MCF 10A (cell line): ENCODE measurements at regions of chr7 and their contacts with region 1.

Region 1: DNA sequence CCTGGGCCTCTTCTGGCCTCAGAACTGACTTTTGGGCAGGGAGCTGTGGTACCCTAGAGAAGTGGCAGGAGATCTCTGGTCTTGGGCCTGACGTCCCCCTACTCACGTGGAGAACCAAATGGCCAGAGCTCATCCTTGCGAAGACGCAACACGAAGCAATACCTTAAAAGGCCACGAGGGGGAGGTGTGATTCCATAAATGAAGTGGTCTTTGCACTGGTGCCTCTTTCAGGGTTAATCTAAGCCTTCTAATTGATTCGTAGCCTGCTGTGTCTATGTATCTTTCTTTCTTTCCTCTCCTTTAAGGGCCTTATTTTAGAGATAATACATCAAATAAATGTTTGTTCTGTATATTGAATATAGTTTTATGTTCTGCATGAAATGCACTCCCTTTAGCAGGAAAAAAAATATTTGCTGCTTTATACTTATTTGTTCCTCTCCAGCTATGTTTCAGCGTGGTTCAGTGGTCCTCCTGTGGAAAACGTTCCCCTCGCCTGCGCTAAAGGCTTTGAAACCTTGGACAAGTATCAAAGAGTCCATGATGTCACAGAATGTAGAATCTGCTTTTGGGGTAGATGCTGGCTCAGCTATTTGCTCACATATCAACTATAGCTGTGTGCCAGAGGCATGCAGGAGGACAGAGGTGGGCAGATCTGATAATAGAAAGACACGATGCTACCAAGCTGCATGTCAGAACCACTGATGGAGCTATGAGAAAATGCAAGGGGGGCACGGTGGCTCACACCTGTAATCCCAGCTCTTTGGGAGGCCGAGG is 41.0 kb downstream of the STRA8 start:
- DNase-seq: peak; percentile 82
- H3K4me3 Mint-ChIP-seq: no peak overlapping the region
- H3K27ac Mint-ChIP-seq: no peak overlapping the region
- H3K4me1 Mint-ChIP-seq: no peaks in the 10 kb centered on the region
- H3K27me3 Mint-ChIP-seq: peaks cover 1% of the 10 kb centered on the region
- CTCF ChIP-seq: peak; percentile 85

Region 2: DNA sequence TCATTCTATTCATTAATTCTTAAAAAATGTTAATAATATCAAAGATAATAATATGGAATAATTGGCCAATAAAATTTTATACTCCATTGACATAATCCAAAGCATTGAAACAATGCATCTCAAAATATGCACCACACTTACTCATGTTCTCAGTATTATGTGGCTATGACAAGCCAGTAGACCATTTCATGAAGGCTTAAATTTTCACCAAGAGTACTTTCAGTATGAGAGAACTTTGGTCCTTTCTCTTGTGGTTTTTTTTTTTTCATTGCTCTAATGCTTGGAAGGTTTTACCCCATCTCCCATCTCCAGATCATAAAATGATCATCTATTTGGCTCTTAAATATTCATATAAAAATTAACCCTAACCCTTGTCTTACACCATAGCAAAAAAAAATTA is 172.3 kb before region 1 on chr7:
- CTCF ChIA-PET with region 1: no interaction called
- POLR2A ChIA-PET with region 1: no interaction called
- intact Hi-C with region 1: no loop called
- DNase-seq: no peak
- H3K4me3 Mint-ChIP-seq: no peak overlapping the region
- H3K27ac Mint-ChIP-seq: no peak overlapping the region
- H3K4me1 Mint-ChIP-seq: no peaks in the 10 kb centered on the region
- H3K27me3 Mint-ChIP-seq: no peaks in the 10 kb centered on the region
- CTCF ChIP-seq: no peak

Region 3: DNA sequence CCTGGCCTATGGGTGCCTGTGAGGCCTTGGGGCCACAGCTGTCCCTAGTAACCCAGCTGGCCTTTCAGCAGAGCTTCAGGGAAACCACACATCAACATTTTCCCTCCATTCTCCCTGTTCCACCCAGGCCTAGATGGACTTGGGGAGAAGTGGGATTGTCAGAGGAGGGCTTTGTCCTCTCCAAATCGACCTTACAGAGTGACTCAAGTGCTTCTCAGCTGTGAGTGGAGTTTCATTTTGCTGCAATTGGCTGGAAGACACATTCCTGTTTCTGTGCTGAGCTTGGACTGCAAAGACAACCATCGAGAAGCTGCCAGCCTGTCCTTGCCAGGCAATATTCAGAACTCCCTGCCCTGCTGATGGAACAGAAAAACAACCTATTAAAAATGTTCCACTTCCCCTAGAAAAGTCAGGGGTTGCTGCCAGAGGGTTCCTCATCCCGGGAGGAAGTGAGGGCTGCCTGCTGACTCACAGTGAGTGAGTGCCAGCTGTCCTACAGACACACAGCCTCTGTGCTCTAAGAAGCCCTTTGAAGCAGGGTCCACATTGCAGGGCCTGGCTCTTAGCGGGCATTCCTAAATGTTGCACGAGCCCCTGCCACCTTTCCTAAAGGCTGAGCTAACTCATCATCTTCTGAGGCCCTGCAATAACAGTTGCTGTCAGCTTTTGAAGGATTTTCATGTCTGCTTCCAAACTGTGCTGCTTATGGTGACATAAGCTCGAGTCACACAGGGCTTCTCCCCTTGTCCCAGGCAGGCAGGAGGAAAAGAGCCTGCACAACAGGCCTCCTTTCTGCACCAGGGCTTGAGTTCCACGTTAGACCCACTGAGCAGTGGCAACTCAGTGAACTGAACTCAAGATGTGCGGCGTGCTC is 20.5 kb before region 1 on chr7:
- CTCF ChIA-PET with region 1: interaction called, 21 read pairs
- POLR2A ChIA-PET with region 1: no interaction called
- intact Hi-C with region 1: no loop called
- DNase-seq: peak; percentile 76
- H3K4me3 Mint-ChIP-seq: no peak overlapping the region
- H3K27ac Mint-ChIP-seq: peak overlapping the region; percentile 72
- H3K4me1 Mint-ChIP-seq: no peaks in the 10 kb centered on the region
- H3K27me3 Mint-ChIP-seq: no peaks in the 10 kb centered on the region
- CTCF ChIP-seq: no peak

Region 4: DNA sequence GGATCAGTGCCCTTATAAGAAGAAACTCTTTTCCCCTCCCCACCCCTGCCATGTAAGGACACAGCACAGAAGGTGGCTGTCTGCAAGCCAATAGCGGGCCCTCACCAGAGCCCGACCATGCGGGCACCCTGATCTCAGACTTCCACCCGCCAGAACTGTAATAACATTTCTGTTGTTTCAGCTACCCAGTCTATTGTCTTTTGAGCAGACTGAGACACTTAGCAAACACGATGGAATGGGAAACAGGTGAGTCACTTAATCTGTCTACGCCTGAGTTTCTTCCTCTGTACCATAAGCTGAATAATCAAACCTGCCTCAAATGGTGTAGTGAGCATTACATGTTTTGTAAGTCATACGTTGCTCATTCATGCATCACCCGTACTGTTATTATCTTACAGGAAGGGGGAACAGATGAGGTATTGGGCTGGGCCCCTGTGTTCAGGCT is 17.1 kb after region 1 on chr7:
- CTCF ChIA-PET with region 1: interaction called, 13 read pairs
- POLR2A ChIA-PET with region 1: no interaction called
- intact Hi-C with region 1: no loop called
- DNase-seq: peak; percentile 80
- H3K4me3 Mint-ChIP-seq: no peak overlapping the region
- H3K27ac Mint-ChIP-seq: peak overlapping the region; percentile 83
- H3K4me1 Mint-ChIP-seq: peaks cover 13% of the 10 kb centered on the region
- H3K27me3 Mint-ChIP-seq: no peaks in the 10 kb centered on the region
- CTCF ChIP-seq: no peak

Region 5: DNA sequence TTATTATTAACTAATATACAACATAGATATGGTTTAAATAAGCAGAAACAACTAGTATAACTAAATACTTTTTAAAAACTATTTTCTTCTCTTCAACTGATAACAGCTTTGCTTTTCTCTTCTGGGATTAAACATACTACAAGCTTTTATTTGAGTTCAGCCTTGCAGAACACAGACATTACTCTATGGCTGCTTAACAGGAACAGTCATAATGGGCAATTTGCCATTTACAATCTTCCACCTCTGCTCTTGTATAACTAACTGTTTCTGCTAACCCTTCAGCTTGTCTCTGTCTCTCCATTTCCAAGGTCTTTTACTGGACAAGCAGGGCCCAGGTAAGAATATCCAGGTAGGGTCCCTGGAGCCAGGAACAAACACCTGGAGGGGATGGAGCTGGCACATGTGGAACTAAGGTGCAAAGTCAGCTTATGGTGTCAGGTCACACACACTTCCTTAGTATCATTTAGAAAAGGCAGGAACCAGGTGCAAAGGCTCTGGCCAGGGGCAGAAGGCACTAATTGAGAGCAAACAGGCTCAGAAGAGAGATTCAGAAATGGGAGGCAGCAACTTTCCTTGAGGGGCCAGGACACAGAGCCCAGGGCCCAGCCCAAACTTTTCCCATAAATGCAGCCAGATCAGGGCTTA is 52.1 kb after region 1 on chr7:
- CTCF ChIA-PET with region 1: interaction called, 14 read pairs
- POLR2A ChIA-PET with region 1: no interaction called
- intact Hi-C with region 1: no loop called
- DNase-seq: no peak
- H3K4me3 Mint-ChIP-seq: no peak overlapping the region
- H3K27ac Mint-ChIP-seq: no peak overlapping the region
- H3K4me1 Mint-ChIP-seq: peaks cover 5% of the 10 kb centered on the region
- H3K27me3 Mint-ChIP-seq: no peaks in the 10 kb centered on the region
- CTCF ChIP-seq: no peak

Region 6: DNA sequence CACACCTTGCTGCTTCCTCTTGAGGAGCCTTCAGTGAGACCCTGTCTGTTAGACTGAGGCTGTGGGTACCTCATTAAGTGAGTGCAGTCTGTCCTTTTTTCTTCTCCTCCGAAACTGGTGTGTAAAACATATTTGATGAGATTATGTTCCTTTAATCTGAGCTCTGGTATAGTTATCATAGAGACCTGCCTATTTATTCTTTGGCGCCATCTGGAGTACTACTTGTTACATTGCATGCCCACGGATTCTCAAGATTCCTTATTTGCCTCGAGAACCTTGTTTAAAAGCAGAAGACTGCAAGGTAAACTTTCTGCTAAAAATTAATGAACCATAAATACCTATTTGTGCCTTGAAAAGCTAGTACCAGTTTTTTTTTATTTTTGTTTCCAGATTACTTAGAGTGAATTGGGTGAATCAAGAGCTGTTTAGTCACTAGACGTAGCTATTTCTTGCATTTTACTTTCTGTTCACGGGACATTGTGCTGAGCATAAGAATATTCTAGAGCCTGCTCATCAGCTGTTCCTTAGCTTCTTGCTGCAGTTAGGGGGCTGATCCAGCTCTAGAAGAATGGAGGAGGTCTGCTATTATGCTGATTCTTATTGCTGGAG is 370.7 kb after region 1 on chr7:
- CTCF ChIA-PET with region 1: interaction called, 76 read pairs
- POLR2A ChIA-PET with region 1: interaction called, 4 read pairs
- intact Hi-C with region 1: no loop called
- DNase-seq: peak; percentile 57
- H3K4me3 Mint-ChIP-seq: no peak overlapping the region
- H3K27ac Mint-ChIP-seq: no peak overlapping the region
- H3K4me1 Mint-ChIP-seq: no peaks in the 10 kb centered on the region
- H3K27me3 Mint-ChIP-seq: no peaks in the 10 kb centered on the region
- CTCF ChIP-seq: peak; percentile 46